ENCODE measurements at regions of chr1 and their contacts with region 1.

Region 1: DNA sequence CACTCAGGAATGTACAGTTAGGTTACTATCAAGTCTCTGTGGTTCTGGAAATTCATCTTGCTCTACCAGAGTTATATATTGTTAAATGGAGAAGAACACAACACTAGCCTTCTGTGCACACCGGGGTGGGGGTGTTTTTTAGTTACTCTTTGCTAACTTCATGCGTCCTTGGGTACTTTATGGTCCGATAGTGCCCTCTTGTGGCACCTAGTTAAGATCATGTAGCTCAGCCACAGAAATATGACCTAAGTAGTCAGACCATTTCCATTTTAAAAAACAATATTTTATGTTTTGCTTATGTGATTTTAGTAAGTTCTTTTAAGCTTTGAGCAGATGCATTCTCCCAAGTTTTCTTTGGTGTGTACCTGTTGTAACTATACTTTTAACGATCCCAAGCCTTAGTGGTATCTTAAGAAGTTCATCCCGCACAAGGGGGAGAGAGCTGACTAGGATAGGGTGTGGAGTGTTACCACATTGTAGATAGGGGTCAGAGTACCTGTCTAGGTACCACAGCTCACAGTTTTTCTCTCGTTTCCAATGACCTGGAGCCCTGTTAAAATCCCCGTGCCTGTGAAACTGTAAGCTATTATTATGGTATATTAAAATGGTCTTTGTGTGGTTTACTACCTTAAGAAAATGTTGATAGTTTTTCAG is 20.6 kb upstream of the SH3D21 start:
- DNase-seq: peak; percentile 87
- H3K4me3 ChIP-seq: no peak overlapping the region
- H3K27ac ChIP-seq: peak overlapping the region; percentile 1
- H3K27me3 ChIP-seq: no peaks in the 10 kb centered on the region
- CTCF ChIP-seq: peak; percentile 67

Region 2: GRCh38 chr1:36134505-36135329 is 150.9 kb before region 1 on chr1:
- in situ Hi-C with region 1: loop called (anchors 10 kb)
- DNase-seq: peak; percentile 55
- H3K4me3 ChIP-seq: no peak overlapping the region
- H3K27ac ChIP-seq: no peak overlapping the region
- H3K27me3 ChIP-seq: no peaks in the 10 kb centered on the region
- CTCF ChIP-seq: peak; percentile 90

Region 3: DNA sequence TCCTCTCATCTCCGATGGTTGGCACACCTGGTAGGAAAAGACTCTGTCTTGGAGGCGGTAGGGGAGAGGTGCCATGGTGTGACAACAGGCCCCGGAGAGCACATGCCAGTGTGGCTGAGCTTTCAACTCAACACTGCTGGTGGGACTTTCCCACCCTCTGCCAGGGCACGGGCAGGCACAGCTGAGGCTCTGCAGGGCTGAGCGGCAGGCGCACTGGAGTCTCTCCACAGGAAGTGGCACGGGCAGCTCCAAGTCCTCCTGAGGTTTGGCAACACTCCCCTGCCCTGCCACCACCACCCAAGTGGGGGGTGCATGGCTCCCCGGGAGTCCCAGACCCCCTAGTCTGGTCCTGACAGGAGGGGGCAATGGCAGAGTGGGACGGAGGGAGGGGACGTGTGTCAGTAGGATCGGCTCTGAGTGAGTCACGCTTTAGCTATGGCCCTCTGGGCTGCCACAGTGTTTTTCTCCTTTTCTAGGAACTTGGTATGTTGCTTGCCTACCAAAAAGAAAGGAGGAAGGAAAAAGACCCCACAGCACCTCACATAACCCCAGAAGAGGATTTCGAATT is 65.2 kb after region 1 on chr1:
- in situ Hi-C with region 1: no loop called
- DNase-seq: peak; percentile 79
- H3K4me3 ChIP-seq: no peak overlapping the region
- H3K27ac ChIP-seq: peak overlapping the region; percentile 91
- H3K27me3 ChIP-seq: no peaks in the 10 kb centered on the region
- CTCF ChIP-seq: no peak

Measured in brain microvascular endothelial cell (primary cell).